Activated CD8-positive, alpha-beta T cell treated with anti-CD3 and anti-CD28 coated beads for 36 hours (primary cell): ENCODE measurements at regions of chr10 and their contacts with region 1.

Region 1: DNA sequence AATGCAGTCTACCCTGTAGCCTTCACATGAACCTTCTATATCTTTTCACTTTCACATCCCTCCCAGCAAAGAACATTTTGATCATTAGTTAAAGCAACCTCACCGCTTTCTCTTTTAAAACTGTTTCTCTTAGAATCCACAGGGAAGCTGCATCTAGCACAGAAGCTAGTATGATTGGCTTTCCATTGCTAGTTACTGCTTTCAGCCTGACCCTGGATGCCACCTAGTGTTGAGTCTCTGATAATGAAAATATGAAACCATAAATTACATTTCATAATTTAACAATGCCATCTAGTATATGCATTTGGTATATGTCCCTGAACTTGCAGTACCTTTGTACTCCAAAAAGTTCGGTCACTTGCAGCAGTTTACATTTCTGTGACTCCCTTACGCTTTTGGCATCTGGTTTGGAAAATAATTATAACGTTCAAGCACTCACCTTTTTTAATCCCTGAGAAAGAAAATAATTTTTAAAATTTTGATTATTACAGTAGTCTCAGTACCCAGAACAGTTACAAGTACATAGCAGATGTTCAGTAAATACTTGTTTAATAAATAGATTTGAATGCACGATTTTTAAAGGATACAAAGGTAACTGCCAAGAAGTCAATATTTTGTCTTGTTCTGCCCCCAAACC is 22.7 kb downstream of the CISD1 start:
- DNase-seq: peak; percentile 41
- ATAC-seq: peak; percentile 65
- H3K4me3 Mint-ChIP-seq: no peak overlapping the region
- H3K27ac Mint-ChIP-seq: no peak overlapping the region
- H3K4me1 Mint-ChIP-seq: no peaks in the 10 kb centered on the region
- H3K27me3 Mint-ChIP-seq: no peaks in the 10 kb centered on the region
- CTCF ChIP-seq: peak; percentile 79

Region 2: DNA sequence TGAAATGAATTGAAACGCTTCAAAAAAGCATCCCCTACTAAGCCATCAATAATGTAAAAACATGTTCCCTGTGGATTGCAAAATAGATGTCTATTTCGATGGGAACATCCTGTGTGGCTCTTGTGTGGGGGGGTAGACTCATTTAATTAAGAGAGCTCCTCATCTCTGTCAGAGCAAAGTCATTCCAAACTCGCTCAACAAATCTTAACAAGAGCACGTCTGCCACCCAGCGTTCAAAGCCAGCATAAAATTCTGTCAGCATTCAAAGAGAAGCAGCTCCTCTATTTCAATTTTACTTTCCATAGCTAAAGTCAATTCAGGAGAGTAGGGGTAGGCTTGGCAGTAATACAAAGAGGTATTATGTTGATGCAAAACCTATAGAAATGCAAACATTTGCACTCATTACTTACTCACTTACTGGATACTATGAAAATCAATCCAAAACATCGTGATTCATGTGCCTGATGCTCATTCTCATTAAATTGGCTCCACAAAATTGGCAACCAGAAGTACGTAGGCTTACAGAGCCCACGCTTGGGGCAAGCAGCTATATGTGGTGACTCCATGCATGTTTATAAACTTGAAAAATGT is 138.9 kb before region 1 on chr10:
- CTCF ChIA-PET with region 1: interaction called, 11 read pairs
- POLR2A ChIA-PET with region 1: no interaction called
- intact Hi-C with region 1: no loop called
- DNase-seq: peak; percentile 67
- ATAC-seq: no peak
- H3K4me3 Mint-ChIP-seq: no peak overlapping the region
- H3K27ac Mint-ChIP-seq: no peak overlapping the region
- H3K4me1 Mint-ChIP-seq: no peaks in the 10 kb centered on the region
- H3K27me3 Mint-ChIP-seq: peaks cover 19% of the 10 kb centered on the region
- CTCF ChIP-seq: peak; percentile 68

Region 3: GRCh38 chr10:58396057-58396456 is 104.4 kb after region 1 on chr10:
- CTCF ChIA-PET with region 1: no interaction called
- POLR2A ChIA-PET with region 1: no interaction called
- intact Hi-C with region 1: no loop called
- DNase-seq: no peak
- ATAC-seq: no peak
- H3K4me3 Mint-ChIP-seq: no peak overlapping the region
- H3K27ac Mint-ChIP-seq: no peak overlapping the region
- H3K4me1 Mint-ChIP-seq: peaks cover 13% of the 10 kb centered on the region
- H3K27me3 Mint-ChIP-seq: no peaks in the 10 kb centered on the region
- CTCF ChIP-seq: no peak